ENCODE measurements at regions of chr1 and their contacts with region 1.

Region 1: DNA sequence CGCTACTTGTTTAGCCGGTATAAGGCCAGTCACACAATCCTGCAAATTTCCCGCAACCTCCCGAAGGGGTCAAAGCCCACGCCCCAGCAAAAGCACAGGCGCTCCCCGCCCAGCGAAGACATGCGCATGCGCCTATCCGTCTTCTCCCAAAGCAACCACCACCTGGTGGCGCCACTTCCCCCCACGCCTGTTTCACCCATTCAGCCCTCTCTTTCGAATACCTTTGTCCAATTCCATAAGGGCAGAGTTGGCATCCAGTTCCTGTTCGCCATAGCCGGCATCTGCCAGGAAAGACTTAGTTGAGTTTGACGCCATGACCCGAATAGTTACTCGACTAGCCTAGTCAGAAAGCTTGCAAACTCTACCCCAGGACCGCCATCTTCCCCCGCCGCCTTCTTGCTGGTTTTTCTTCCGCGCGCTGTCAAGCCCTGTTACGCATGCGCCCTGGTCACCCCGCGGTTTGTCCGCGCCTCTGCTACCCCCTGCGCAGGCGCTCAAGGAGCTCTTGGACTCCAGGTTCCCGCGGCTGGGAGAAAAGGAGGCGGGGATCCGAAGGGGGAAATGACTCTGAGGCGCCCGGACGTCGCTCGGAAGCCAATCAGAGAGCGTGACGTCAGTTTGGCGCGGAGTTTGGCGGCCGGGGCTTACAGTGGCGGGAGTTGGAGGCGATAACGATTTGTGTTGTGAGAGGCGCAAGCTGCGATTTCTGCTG is at the starts of genes DTL and INTS7:
- DNase-seq: peak; percentile 99
- ATAC-seq: peak; percentile 86
- H3K4me3 ChIP-seq: peak within 1 kb of the TSS; percentile 58 to 95 (median 84)
- H3K4me3 Mint-ChIP-seq: peak within 1 kb of the TSS; percentile 99
- H3K27ac ChIP-seq: peak within 1 kb of the TSS; percentile 71 to 75
- H3K27ac Mint-ChIP-seq: peak within 1 kb of the TSS; percentile 95
- H3K4me1 ChIP-seq: peaks cover 16 to 19% of the 10 kb centered on the region in 2 donors
- H3K4me1 Mint-ChIP-seq: peaks cover 50% of the 10 kb centered on the region
- H3K27me3 ChIP-seq: no peaks in the 10 kb centered on the region
- H3K27me3 Mint-ChIP-seq: no peaks in the 10 kb centered on the region
- CTCF ChIP-seq: peak; percentile 95
- total RNA-seq, gene DTL: 0.10 and 0.37 TPM in 2 replicates
- total RNA-seq, gene INTS7: 15.9 and 19.2 TPM in 2 replicates

Region 2: GRCh38 chr1:211680752-211681327 is 354.4 kb before region 1 on chr1:
- CTCF ChIA-PET with region 1: interaction called, 41 read pairs
- POLR2A ChIA-PET with region 1: interaction called, 9 read pairs
- intact Hi-C with region 1: loop called (anchors 1 kb)
- DNase-seq: peak; percentile 89
- ATAC-seq: peak; percentile 90
- H3K4me3 ChIP-seq: no peak overlapping the region
- H3K4me3 Mint-ChIP-seq: peak overlapping the region; percentile 44
- H3K27ac ChIP-seq: peak overlapping the region; percentile 70 to 81
- H3K27ac Mint-ChIP-seq: peak overlapping the region; percentile 87
- H3K4me1 ChIP-seq: peaks cover 24 to 35% of the 10 kb centered on the region in 2 donors
- H3K4me1 Mint-ChIP-seq: peaks cover 52% of the 10 kb centered on the region
- H3K27me3 ChIP-seq: no peaks in the 10 kb centered on the region
- H3K27me3 Mint-ChIP-seq: no peaks in the 10 kb centered on the region
- CTCF ChIP-seq: peak; percentile 86

Region 3: DNA sequence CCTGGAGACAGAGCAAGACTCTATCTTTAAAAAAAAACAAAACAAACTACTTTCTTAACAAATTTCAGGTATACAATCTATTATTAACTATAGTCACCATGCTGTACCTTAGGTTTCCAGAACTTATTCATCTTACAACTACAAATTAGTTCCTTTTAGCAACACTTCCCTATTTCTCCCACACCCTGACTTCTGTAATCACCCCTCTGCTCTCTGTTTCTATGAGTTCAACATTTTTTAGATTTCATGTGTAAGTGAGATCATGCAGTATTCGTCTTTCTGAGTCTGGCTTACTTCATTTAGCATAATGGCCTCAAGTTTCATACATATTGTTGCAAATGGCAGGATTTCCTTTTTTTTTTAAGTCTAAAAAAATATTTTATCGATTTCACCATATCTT is 126.8 kb before region 1 on chr1:
- CTCF ChIA-PET with region 1: no interaction called
- POLR2A ChIA-PET with region 1: no interaction called
- intact Hi-C with region 1: no loop called
- DNase-seq: no peak
- ATAC-seq: no peak
- H3K4me3 ChIP-seq: no peak overlapping the region
- H3K4me3 Mint-ChIP-seq: no peak overlapping the region
- H3K27ac ChIP-seq: no peak overlapping the region
- H3K27ac Mint-ChIP-seq: no peak overlapping the region
- H3K4me1 ChIP-seq: no peaks in the 10 kb centered on the region
- H3K4me1 Mint-ChIP-seq: peaks cover 2% of the 10 kb centered on the region
- H3K27me3 ChIP-seq: peaks cover 0 to 4% (median 0%) of the 10 kb centered on the region in 4 experiments
- H3K27me3 Mint-ChIP-seq: peaks cover 3% of the 10 kb centered on the region
- CTCF ChIP-seq: no peak

Region 4: GRCh38 chr1:212012034-212012740 is 23.1 kb before region 1 on chr1:
- CTCF ChIA-PET with region 1: interaction called, 18 read pairs
- POLR2A ChIA-PET with region 1: no interaction called
- intact Hi-C with region 1: loop called (anchors 1 kb)
- DNase-seq: peak; percentile 68
- ATAC-seq: peak; percentile 94
- H3K4me3 ChIP-seq: no peak overlapping the region
- H3K4me3 Mint-ChIP-seq: no peak overlapping the region
- H3K27ac ChIP-seq: no peak overlapping the region
- H3K27ac Mint-ChIP-seq: no peak overlapping the region
- H3K4me1 ChIP-seq: no peaks in the 10 kb centered on the region
- H3K4me1 Mint-ChIP-seq: no peaks in the 10 kb centered on the region
- H3K27me3 ChIP-seq: no peaks in the 10 kb centered on the region
- H3K27me3 Mint-ChIP-seq: no peaks in the 10 kb centered on the region
- CTCF ChIP-seq: peak; percentile 96

Region 5: DNA sequence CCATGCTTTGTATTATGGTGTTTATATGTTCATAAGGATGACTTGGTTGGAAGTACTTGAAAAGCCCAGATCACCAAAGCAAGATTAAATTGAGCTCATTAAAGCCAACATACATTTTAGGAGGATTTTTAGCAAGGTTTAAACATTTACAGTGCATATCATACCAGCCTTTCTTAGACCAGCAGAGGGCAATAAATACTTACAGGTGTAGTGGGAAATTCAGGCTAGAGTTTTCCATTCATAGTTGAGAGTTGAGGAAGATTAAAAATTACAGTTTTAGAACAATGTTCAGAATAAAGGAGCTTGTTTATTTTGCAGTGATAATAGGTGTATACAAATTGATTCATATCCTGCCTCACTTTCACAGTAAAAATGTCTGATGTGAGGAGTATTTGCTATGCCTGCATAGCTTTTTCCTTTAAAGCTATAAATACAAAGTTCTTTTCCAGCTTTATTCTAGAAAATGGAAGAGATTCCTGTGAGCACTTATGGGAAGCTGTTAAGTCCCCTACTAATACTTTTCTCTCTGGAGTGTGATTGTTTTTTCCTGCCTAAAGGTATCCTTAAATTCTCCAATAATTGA is 35.5 kb after region 1 on chr1:
- CTCF ChIA-PET with region 1: interaction called, 13 read pairs
- POLR2A ChIA-PET with region 1: no interaction called
- intact Hi-C with region 1: no loop called
- DNase-seq: peak; percentile 64
- ATAC-seq: no peak
- H3K4me3 ChIP-seq: no peak overlapping the region
- H3K4me3 Mint-ChIP-seq: no peak overlapping the region
- H3K27ac ChIP-seq: no peak overlapping the region
- H3K27ac Mint-ChIP-seq: no peak overlapping the region
- H3K4me1 ChIP-seq: no peaks in the 10 kb centered on the region
- H3K4me1 Mint-ChIP-seq: no peaks in the 10 kb centered on the region
- H3K27me3 ChIP-seq: no peaks in the 10 kb centered on the region
- H3K27me3 Mint-ChIP-seq: no peaks in the 10 kb centered on the region
- CTCF ChIP-seq: peak; percentile 63

Region 6: DNA sequence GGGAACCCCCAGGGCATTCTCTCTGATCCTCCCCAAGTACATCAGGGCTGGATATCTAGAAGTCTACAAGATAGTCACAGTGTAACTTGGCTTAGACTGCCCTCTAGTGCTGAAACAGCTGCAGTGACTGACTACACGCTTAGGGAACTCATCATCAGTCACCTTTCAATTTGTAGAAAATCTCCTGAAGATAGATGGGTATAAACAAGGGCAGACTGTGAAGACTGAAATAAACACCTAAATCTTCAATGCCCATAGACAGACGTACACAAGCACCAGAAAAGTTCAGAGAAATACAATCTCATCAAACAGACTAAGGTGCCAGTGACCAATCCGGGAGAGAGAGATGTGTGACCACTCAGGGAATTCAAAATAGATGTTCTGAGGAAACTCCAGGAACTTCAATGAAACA is 332.8 kb after region 1 on chr1:
- CTCF ChIA-PET with region 1: interaction called, 6 read pairs
- POLR2A ChIA-PET with region 1: no interaction called
- intact Hi-C with region 1: loop called (anchors 1 kb)
- DNase-seq: peak; percentile 72
- ATAC-seq: peak; percentile 80
- H3K4me3 ChIP-seq: no peak overlapping the region
- H3K4me3 Mint-ChIP-seq: no peak overlapping the region
- H3K27ac ChIP-seq: no peak overlapping the region
- H3K27ac Mint-ChIP-seq: no peak overlapping the region
- H3K4me1 ChIP-seq: no peaks in the 10 kb centered on the region
- H3K4me1 Mint-ChIP-seq: peaks cover 2% of the 10 kb centered on the region
- H3K27me3 ChIP-seq: no peaks in the 10 kb centered on the region
- H3K27me3 Mint-ChIP-seq: no peaks in the 10 kb centered on the region
- CTCF ChIP-seq: peak; percentile 86

Region 7: DNA sequence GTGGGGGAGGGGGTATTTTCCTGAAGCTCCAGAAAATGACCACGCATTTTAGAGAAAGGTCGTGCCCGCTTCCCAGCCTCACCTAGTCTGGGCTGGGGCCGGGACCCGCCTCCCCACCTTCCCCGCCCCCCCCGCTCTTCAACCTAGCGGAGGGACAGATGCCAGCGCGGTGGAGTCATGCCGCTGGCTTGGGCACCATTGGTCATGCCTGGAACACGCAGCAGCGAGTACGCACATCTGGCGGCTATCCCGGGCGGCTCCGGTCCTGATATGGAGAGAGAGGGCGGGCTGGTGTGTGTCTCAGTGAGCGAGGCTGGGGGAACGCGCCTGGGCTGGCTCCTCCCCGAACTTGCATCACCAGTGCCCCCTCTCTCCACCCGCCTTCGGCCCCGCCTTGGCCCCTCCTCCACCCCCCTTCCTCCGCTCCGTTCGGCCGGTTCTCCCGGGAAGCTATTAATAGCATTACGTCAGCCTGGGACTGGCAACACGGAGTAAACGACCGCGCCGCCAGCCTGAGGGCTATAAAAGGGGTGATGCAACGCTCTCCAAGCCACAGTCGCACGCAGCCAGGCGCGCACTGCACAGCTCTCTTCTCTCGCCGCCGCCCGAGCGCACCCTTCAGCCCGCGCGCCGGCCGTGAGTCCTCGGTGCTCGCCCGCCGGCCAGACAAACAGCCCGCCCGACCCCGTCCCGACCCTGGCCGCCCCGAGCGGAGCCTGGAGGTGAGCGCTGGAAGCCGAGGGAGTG is 573.1 kb after region 1 on chr1 and contains the start of gene ATF3:
- CTCF ChIA-PET with region 1: interaction called, 4 read pairs
- POLR2A ChIA-PET with region 1: no interaction called
- intact Hi-C with region 1: loop called (anchors 5 kb)
- DNase-seq: peak; percentile 91
- ATAC-seq: peak; percentile 80
- H3K4me3 ChIP-seq: peak within 1 kb of the TSS; percentile 53 to 76 (median 72)
- H3K4me3 Mint-ChIP-seq: peak within 1 kb of the TSS; percentile 97
- H3K27ac ChIP-seq: peak within 1 kb of the TSS in 1 of 2 donors; percentile 54
- H3K27ac Mint-ChIP-seq: peak within 1 kb of the TSS; percentile 87
- H3K4me1 ChIP-seq: peaks cover 28 to 32% of the 10 kb centered on the region in 2 donors
- H3K4me1 Mint-ChIP-seq: peaks cover 28% of the 10 kb centered on the region
- H3K27me3 ChIP-seq: peaks cover 0 to 63% (median 36%) of the 10 kb centered on the region in 4 experiments
- H3K27me3 Mint-ChIP-seq: peaks cover 52% of the 10 kb centered on the region
- CTCF ChIP-seq: no peak
- total RNA-seq, gene ATF3: 2.7 and 4.5 TPM in 2 replicates

Region 8: DNA sequence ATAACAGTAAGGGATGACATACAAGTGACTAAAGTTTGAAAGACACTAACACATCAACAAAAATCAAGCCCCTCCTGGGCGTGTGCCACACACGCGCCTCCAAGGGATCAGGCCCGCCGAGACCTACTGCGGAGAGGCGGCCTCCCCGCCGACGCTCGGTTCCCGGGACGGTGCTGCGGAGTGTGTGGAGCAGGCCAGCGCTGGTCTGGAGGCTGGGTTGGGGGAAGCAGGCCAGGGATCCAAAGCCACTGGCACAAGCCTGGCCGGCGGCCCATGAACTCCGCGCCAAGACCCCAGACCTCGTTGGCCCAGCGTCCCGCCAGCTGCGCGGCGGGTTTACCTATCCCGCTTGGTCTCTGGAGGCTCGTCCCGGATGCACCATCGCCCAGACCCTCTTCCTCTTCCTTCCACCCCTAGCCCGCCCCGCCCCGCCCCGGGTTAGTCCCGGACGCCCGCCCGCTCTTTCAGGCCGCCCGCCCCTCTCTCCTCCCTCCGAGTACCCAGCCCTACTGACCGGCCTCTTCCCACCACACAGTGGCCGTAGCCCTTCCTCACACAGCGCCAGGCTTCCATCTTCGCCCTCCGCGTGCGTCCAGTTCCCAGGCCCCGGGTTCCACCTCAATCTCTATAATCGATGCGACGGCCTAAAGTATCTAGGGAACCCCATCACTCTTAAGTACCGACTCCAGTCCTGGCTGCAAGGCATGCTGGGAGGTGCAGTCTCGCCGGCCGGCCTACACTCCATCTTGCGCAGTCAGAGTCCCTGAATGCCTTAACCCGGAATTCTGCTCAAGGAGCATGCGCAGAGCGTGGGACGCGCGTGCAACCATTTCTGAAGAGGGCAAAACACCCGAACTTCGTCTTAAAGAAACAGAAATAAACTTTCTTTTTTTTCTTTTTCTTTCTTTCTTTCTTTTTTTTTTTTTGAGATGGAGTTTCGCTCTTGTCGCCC is 980.1 kb after region 1 on chr1 and contains the start of gene ANGEL2:
- CTCF ChIA-PET with region 1: no interaction called
- POLR2A ChIA-PET with region 1: no interaction called
- intact Hi-C with region 1: loop called (anchors 10 kb)
- DNase-seq: peak; percentile 97
- ATAC-seq: peak; percentile 96
- H3K4me3 ChIP-seq: peak within 1 kb of the TSS; percentile 65 to 89 (median 77)
- H3K4me3 Mint-ChIP-seq: peak within 1 kb of the TSS; percentile 98
- H3K27ac ChIP-seq: peak within 1 kb of the TSS; percentile 81 to 92
- H3K27ac Mint-ChIP-seq: peak within 1 kb of the TSS; percentile 99
- H3K4me1 ChIP-seq: peaks cover 7 to 14% of the 10 kb centered on the region in 2 donors
- H3K4me1 Mint-ChIP-seq: peaks cover 31% of the 10 kb centered on the region
- H3K27me3 ChIP-seq: no peaks in the 10 kb centered on the region
- H3K27me3 Mint-ChIP-seq: no peaks in the 10 kb centered on the region
- CTCF ChIP-seq: no peak
- total RNA-seq, gene ANGEL2: 86.0 and 94.2 TPM in 2 replicates

Measured in B cell (primary cell).